Activated CD4-positive, alpha-beta T cell treated with anti-CD3 and anti-CD28 coated beads for 36 hours (primary cell): ENCODE measurements at regions of chr17 and their contacts with region 1.

Region 1: GRCh38 chr17:64129764-64130558 is at the start of gene ERN1:
- DNase-seq: peak; percentile 97
- ATAC-seq: peak; percentile 84
- H3K4me3 Mint-ChIP-seq: peak within 1 kb of the TSS; percentile 87
- H3K27ac Mint-ChIP-seq: peak within 1 kb of the TSS; percentile 96
- H3K4me1 Mint-ChIP-seq: peaks cover 54% of the 10 kb centered on the region
- H3K27me3 Mint-ChIP-seq: no peaks in the 10 kb centered on the region
- total RNA-seq, gene ERN1: 23.7 to 26.8 TPM

Region 2: GRCh38 chr17:63621766-63622519 is 508.0 kb before region 1 on chr17 and contains the start of gene MAP3K3:
- CTCF ChIA-PET with region 1: no interaction called
- POLR2A ChIA-PET with region 1: no interaction called
- intact Hi-C with region 1: loop called in 1 of 2 experiments (anchors 2 kb)
- DNase-seq: peak; percentile 98
- ATAC-seq: peak; percentile 93
- H3K4me3 Mint-ChIP-seq: peak within 1 kb of the TSS; percentile 88
- H3K27ac Mint-ChIP-seq: peak within 1 kb of the TSS; percentile 90
- H3K4me1 Mint-ChIP-seq: peaks cover 36% of the 10 kb centered on the region
- H3K27me3 Mint-ChIP-seq: no peaks in the 10 kb centered on the region
- total RNA-seq, gene MAP3K3: 22.4 to 22.9 TPM

Region 3: GRCh38 chr17:63911657-63912426 is 218.1 kb before region 1 on chr17:
- CTCF ChIA-PET with region 1: interaction called, 8 read pairs
- POLR2A ChIA-PET with region 1: no interaction called
- intact Hi-C with region 1: loop called in 1 of 2 experiments (anchors 2 kb)
- DNase-seq: peak; percentile 80
- ATAC-seq: peak; percentile 78
- H3K4me3 Mint-ChIP-seq: no peak overlapping the region
- H3K27ac Mint-ChIP-seq: no peak overlapping the region
- H3K4me1 Mint-ChIP-seq: no peaks in the 10 kb centered on the region
- H3K27me3 Mint-ChIP-seq: no peaks in the 10 kb centered on the region

Region 4: DNA sequence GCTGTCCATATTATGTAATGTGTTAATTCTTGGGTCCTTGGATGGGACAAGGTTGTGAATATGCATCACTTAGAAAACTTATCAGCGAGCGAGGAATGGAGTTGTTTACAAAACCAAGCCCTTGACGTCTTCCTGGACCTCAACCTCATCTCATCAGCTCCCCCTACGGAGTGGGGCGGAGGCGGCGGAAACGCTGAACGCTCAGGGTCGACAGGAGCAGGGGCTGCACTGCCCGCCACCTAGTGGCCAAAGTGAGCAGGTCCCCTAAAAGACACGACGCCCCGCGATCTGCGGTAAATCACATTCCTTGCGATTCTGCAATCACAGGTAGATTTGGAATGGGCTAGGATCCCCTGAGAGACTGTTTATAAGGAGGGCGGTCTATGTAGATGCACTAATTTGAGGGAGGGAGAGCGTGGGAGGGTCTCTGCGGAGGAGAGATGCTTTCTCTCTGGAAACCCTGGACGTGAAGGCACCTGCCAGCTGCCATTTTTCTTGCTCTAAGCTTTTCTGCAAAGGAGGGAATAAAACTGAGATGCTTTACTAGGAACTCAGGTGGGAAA is 104.1 kb before region 1 on chr17:
- CTCF ChIA-PET with region 1: interaction called, 362 read pairs
- POLR2A ChIA-PET with region 1: interaction called, 12 read pairs
- intact Hi-C with region 1: loop called (anchors 1 kb)
- DNase-seq: peak; percentile 95
- ATAC-seq: peak; percentile 71
- H3K4me3 Mint-ChIP-seq: peak overlapping the region; percentile 58
- H3K27ac Mint-ChIP-seq: peak overlapping the region; percentile 89
- H3K4me1 Mint-ChIP-seq: peaks cover 62% of the 10 kb centered on the region
- H3K27me3 Mint-ChIP-seq: no peaks in the 10 kb centered on the region

Region 5: DNA sequence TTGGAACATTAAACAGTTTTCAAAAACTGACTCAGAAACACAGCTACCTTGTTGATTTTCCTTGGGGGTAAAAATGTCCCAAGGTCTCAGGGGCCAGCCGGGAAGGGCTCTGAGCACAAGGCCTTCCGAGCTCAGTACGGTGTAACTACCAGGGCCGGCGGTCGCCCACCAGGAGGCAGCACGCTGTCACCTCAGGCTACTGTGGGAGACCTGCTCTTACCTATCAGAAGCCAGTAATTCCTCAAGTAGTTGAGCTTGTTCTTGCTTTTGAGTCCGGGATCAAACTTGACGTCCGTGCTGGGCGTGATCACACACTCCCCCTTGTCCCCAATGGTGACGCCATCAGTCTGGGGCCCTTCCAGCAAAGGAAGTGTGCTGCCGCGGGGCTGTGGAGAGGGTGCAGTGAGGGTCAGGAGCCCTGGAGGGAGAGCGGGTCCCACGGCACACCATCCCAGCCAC is 66.2 kb before region 1 on chr17:
- CTCF ChIA-PET with region 1: interaction called, 172 read pairs
- POLR2A ChIA-PET with region 1: interaction called, 6 read pairs
- intact Hi-C with region 1: loop called (anchors 1 kb)
- DNase-seq: peak; percentile 84
- ATAC-seq: peak; percentile 45
- H3K4me3 Mint-ChIP-seq: peak overlapping the region; percentile 56
- H3K27ac Mint-ChIP-seq: peak overlapping the region; percentile 85
- H3K4me1 Mint-ChIP-seq: peaks cover 84% of the 10 kb centered on the region
- H3K27me3 Mint-ChIP-seq: no peaks in the 10 kb centered on the region

Region 6: GRCh38 chr17:64145757-64146417 is 15.9 kb after region 1 on chr17:
- CTCF ChIA-PET with region 1: interaction called, 78 read pairs
- POLR2A ChIA-PET with region 1: interaction called, 24 read pairs
- intact Hi-C with region 1: loop called (anchors 1 kb)
- DNase-seq: peak; percentile 97
- ATAC-seq: peak; percentile 96
- H3K4me3 Mint-ChIP-seq: no peak overlapping the region
- H3K27ac Mint-ChIP-seq: no peak overlapping the region
- H3K4me1 Mint-ChIP-seq: peaks cover 24% of the 10 kb centered on the region
- H3K27me3 Mint-ChIP-seq: no peaks in the 10 kb centered on the region

Region 7: DNA sequence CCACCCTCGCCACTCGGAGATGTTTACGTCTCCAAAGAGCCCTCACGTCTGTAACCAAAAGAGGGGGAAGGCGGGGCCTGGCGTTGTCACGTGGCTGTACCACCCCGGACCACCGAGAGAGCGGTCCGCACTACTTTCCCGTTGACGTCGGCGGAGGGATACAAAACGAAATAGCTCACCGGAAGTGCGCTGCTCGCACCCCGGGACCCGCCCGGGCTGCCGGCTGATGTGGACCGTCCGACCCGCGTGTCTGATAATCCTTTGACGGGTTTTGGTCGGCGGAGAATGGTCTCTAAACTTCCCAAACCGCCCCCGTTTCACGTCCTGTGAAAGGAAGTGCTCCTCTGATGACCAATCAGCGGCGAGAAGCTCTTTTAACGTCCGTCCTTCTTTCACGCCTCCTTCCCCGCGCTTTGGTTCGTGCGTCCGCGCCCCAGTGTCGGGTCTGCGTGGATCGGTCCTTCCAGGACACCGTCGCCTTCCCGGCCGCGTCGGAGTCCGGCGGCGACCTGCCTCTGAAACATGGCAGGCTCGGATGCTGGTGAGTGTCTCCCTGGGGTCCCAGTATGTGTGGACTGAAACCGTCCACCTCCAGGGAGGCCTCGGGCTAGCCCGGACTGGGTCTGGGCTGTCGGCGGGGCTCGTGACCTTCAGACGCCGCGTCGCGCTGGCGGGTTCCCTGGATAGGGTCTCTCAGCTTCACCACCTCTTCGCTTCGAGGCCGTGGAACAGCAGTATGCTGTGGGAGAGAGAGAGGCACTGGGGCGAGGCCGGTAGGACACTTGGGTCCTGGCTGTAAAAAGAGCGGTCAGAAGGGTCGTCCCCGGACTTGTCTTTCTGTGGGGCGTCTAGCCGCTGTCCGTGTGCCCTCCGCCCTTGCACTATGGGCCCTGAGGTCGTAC is 376.9 kb after region 1 on chr17 and contains the start of gene CEP95:
- CTCF ChIA-PET with region 1: no interaction called
- POLR2A ChIA-PET with region 1: interaction called, 6 read pairs
- intact Hi-C with region 1: loop called in 1 of 2 experiments (anchors 1 kb)
- DNase-seq: peak; percentile 97
- ATAC-seq: peak; percentile 56
- H3K4me3 Mint-ChIP-seq: peak within 1 kb of the TSS; percentile 100
- H3K27ac Mint-ChIP-seq: peak within 1 kb of the TSS; percentile 100
- H3K4me1 Mint-ChIP-seq: peaks cover 48% of the 10 kb centered on the region
- H3K27me3 Mint-ChIP-seq: no peaks in the 10 kb centered on the region
- total RNA-seq, gene CEP95: 40.5 to 42.8 TPM